HEK293T (cell line): ENCODE measurements at regions of chr6 and their contacts with region 1.

Region 1: GRCh38 chr6:28136585-28137504 is 4.8 kb upstream of the ZKSCAN8 start:
- DNase-seq: peak; percentile 71

Region 2: DNA sequence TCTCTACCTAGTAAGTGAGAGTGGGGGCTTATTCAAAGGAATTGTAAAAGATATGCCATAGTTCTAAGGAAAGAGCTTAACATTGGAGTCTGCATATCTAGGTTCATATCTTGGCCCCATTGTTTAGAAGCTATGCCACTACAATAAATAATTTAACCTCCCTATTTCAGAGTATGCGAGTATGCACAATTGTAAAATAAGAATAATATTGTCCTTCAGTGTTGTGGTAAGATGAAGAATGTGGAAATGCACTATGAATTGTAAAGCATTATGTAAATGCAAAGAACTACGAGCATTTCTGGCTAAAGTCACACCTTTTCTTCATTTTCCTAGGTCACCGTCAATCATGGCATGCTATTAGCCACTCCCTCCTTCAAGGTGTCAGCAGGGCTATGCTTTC is 72.6 kb before region 1 on chr6:
- CTCF ChIA-PET with region 1: no interaction called
- POLR2A ChIA-PET with region 1: no interaction called
- DNase-seq: no peak

Region 3: GRCh38 chr6:28124102-28124970 is 12.5 kb before region 1 on chr6 and contains the start of gene ZSCAN16:
- CTCF ChIA-PET with region 1: no interaction called
- POLR2A ChIA-PET with region 1: interaction called, 41 read pairs
- DNase-seq: peak; percentile 83

Region 4: GRCh38 chr6:28212510-28213212 is 75.8 kb after region 1 on chr6:
- CTCF ChIA-PET with region 1: no interaction called
- POLR2A ChIA-PET with region 1: interaction called, 21 read pairs
- DNase-seq: peak; percentile 62

Region 5: GRCh38 chr6:28252009-28252975 is 115.4 kb after region 1 on chr6 and contains the start of gene ZKSCAN4:
- CTCF ChIA-PET with region 1: no interaction called
- POLR2A ChIA-PET with region 1: interaction called, 19 read pairs
- DNase-seq: peak; percentile 88

Region 6: DNA sequence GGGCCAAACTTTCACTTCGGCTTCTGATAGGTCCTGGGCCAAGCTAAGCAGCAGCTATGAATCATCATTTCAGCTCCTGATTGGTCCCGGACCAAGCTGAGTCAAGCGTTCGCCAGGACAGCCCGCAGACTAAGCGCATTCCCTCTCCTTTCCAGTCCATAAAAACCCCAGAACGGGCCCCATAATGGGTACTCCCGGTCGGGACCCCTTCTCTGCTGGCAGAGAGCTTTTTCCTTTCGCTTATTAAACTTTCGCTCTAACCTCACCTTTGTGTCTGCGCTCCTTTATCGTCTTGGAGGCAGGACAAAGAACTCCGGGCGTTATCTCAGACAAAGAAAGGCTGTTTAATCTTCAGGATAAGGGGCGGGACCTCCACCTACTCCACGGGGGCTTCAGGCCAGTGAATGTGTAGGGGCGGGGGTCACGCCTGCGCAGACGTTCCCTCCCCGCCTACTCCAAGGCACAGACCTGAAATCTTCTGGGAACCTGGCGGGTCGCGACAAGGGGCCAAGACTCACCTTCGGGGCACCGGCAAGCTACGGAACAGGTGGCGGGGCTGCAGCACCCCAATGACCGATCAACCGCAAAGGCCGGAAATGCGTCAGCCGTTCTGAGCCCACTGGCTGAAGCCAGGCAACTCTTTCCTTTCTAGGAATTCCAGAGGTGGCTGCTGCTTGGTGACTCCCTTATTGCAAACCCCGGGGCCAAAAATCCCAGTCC is 198.9 kb after region 1 on chr6 and contains the start of gene ZSCAN31:
- CTCF ChIA-PET with region 1: no interaction called
- POLR2A ChIA-PET with region 1: interaction called, 10 read pairs
- DNase-seq: peak; percentile 83